MCF 10A (cell line): ENCODE measurements at regions of chr7 and their contacts with region 1.

Region 1: GRCh38 chr7:86469680-86470295 is 173.9 kb upstream of the GRM3 start:
- DNase-seq: peak; percentile 80
- H3K4me3 Mint-ChIP-seq: no peak overlapping the region
- H3K27ac Mint-ChIP-seq: no peak overlapping the region
- H3K4me1 Mint-ChIP-seq: no peaks in the 10 kb centered on the region
- H3K27me3 Mint-ChIP-seq: peaks cover 22% of the 10 kb centered on the region
- CTCF ChIP-seq: peak; percentile 62

Region 2: GRCh38 chr7:85890244-85890811 is 579.5 kb before region 1 on chr7:
- CTCF ChIA-PET with region 1: interaction called, 27 read pairs
- POLR2A ChIA-PET with region 1: no interaction called
- intact Hi-C with region 1: loop called (anchors 1 kb)
- DNase-seq: peak; percentile 30
- H3K4me3 Mint-ChIP-seq: no peak overlapping the region
- H3K27ac Mint-ChIP-seq: no peak overlapping the region
- H3K4me1 Mint-ChIP-seq: no peaks in the 10 kb centered on the region
- H3K27me3 Mint-ChIP-seq: peaks cover 44% of the 10 kb centered on the region
- CTCF ChIP-seq: peak; percentile 53

Region 3: DNA sequence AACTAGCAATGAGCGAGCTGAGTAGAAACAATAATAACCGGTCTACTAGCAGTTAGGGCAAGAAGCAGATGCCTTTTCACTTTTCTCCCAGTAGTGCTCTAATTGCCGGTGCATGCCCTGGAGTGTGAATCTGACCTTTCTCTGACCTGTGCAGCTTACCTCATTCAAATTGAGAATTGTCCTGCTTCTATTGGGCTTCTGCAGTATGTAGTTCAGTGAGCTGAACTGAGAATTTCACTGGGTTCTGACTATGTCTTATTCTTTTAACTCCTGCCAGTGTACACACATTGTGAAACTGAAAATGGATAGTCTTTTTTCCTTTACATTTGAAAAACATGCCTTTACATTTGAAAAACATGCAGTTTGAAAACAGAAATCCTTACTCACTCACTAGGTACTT is 16.0 kb after region 1 on chr7:
- CTCF ChIA-PET with region 1: interaction called, 12 read pairs
- POLR2A ChIA-PET with region 1: no interaction called
- intact Hi-C with region 1: no loop called
- DNase-seq: no peak
- H3K4me3 Mint-ChIP-seq: no peak overlapping the region
- H3K27ac Mint-ChIP-seq: no peak overlapping the region
- H3K4me1 Mint-ChIP-seq: no peaks in the 10 kb centered on the region
- H3K27me3 Mint-ChIP-seq: peaks cover 33% of the 10 kb centered on the region
- CTCF ChIP-seq: no peak

Region 4: GRCh38 chr7:86904949-86905834 is 435.4 kb after region 1 on chr7:
- CTCF ChIA-PET with region 1: no interaction called
- POLR2A ChIA-PET with region 1: no interaction called
- intact Hi-C with region 1: loop called (anchors 5 kb)
- DNase-seq: peak; percentile 35
- H3K4me3 Mint-ChIP-seq: no peak overlapping the region
- H3K27ac Mint-ChIP-seq: peak overlapping the region; percentile 49
- H3K4me1 Mint-ChIP-seq: no peaks in the 10 kb centered on the region
- H3K27me3 Mint-ChIP-seq: peaks cover 22% of the 10 kb centered on the region
- CTCF ChIP-seq: peak; percentile 60